Activated CD8-positive, alpha-beta T cell treated with anti-CD3 and anti-CD28 coated beads for 36 hours (primary cell): ENCODE measurements at regions of chr1 and their contacts with region 1.

Region 1: GRCh38 chr1:18581420-18581880 is 49.2 kb upstream of the PAX7 start:
- DNase-seq: peak; percentile 67
- ATAC-seq: peak; percentile 88
- H3K4me3 Mint-ChIP-seq: no peak overlapping the region
- H3K27ac Mint-ChIP-seq: no peak overlapping the region
- H3K4me1 Mint-ChIP-seq: no peaks in the 10 kb centered on the region
- H3K27me3 Mint-ChIP-seq: peaks cover 8% of the 10 kb centered on the region
- CTCF ChIP-seq: peak; percentile 94

Region 2: DNA sequence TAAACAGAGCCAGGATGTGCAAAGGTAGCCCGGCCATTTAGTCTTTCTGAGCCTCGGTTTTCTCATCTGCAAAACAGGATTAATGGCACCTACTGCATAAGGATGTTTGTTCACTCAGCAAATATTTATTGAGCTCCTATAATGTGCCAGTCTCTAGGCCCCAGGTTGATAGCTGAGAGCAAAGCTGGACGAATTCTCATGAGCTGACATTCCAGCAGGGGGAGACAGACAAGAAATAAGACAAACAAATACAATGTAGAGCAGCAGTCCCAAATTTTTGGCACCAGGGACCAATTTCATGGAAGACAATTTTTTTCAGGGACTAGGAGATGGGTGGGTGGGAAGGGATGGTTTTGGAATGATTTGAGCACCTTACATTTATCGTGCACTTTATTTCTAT is 25.1 kb before region 1 on chr1:
- CTCF ChIA-PET with region 1: interaction called, 20 read pairs
- POLR2A ChIA-PET with region 1: interaction called, 3 read pairs
- intact Hi-C with region 1: no loop called
- DNase-seq: peak; percentile 9
- ATAC-seq: no peak
- H3K4me3 Mint-ChIP-seq: no peak overlapping the region
- H3K27ac Mint-ChIP-seq: no peak overlapping the region
- H3K4me1 Mint-ChIP-seq: peaks cover 9% of the 10 kb centered on the region
- H3K27me3 Mint-ChIP-seq: peaks cover 38% of the 10 kb centered on the region
- CTCF ChIP-seq: peak; percentile 31